ENCODE measurements at regions of chr7 and their contacts with region 1.

Region 1: GRCh38 chr7:156949541-156950380 is at the start of gene NOM1:
- DNase-seq: peak; percentile 85 to 91 (median 89)
- H3K4me3 ChIP-seq: peak within 1 kb of the TSS; percentile 85 to 94
- H3K4me3 Mint-ChIP-seq: peak within 1 kb of the TSS; percentile 94 to 97 (median 96)
- H3K27ac ChIP-seq: peak within 1 kb of the TSS; percentile 62
- H3K27ac Mint-ChIP-seq: peak within 1 kb of the TSS; percentile 82 to 97 (median 88)
- H3K4me1 ChIP-seq: peaks cover 32% of the 10 kb centered on the region
- H3K4me1 Mint-ChIP-seq: peaks cover 17 to 28% (median 25%) of the 10 kb centered on the region in 4 donors
- H3K27me3 ChIP-seq: no peaks in the 10 kb centered on the region
- H3K27me3 Mint-ChIP-seq: peaks cover 4 to 11% of the 10 kb centered on the region in 2 donors
- total RNA-seq, gene NOM1: 31.4 to 32.5 TPM

Region 2: DNA sequence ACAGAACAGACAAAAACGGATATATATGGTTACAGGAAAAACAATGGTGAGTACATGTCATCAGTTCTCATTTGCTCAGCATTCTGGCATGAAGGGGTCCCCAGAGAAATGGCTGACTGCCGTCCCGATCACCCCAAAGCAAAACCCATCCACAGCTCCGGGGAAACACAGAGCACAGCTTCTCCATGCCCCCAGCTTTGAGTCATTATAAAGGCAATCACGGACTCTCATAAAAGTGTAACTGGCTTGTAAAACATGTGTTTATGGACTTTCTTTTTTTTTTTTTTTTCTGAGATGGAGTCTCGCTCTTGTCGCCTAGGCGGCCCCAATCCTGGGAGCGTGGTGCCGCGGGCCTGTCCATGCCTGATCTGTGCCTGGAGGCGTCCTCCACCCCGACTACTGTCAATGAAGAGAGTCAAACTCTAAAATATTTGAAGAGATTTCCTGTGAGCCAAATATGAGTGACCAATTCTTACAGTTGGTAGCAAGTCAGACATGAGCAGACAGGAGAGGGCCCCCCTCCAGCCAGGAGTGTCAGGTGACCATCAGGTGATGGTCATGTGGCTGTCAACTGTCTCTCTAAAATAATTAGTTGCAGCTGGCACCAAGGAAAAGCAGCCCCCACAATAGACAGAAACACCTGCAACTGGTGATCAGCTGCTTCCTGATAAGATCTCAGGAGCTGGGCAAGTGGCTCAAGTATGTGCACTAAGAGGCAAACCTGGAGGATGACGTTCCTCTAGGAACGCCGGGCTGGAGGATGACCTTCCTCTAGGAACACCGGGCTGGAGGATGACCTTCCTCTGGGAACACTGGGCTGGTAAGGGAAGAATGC is 22.0 kb before region 1 on chr7:
- CTCF ChIA-PET with region 1: interaction called, 7 read pairs
- POLR2A ChIA-PET with region 1: interaction called, 10 read pairs
- intact Hi-C with region 1: loop called (anchors 2 kb)
- DNase-seq: no peak
- H3K4me3 ChIP-seq: no peak overlapping the region
- H3K4me3 Mint-ChIP-seq: no peak overlapping the region
- H3K27ac ChIP-seq: no peak overlapping the region
- H3K27ac Mint-ChIP-seq: peak overlapping the region in 5 of 7 donors; percentile 25 to 88 (median 36)
- H3K4me1 ChIP-seq: peaks cover 19% of the 10 kb centered on the region
- H3K4me1 Mint-ChIP-seq: peaks cover 14 to 43% (median 32%) of the 10 kb centered on the region in 4 donors
- H3K27me3 ChIP-seq: no peaks in the 10 kb centered on the region
- H3K27me3 Mint-ChIP-seq: peaks cover 0 to 4% of the 10 kb centered on the region in 2 donors

Region 3: DNA sequence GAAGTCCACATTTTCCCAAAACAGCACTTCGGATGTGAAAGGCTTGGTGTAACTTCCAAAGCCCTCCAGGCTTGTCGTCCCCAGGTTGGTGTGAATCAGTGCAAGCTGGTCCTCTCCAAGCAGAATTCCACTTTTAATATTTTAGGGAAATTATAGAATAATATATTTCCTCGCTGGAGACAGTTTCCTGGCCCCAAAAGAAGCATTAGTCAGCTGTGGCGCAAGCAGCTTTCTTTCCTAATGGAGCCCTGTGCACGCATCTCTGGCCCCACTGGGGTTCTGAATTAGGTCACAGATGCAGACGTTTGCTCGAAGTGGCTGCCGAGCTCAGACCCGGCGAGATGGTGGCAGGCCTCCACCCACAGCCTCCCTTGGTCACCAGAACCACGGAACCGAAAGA is 94.0 kb after region 1 on chr7:
- CTCF ChIA-PET with region 1: no interaction called
- POLR2A ChIA-PET with region 1: no interaction called
- intact Hi-C with region 1: no loop called
- DNase-seq: no peak
- H3K4me3 ChIP-seq: no peak overlapping the region
- H3K4me3 Mint-ChIP-seq: no peak overlapping the region
- H3K27ac ChIP-seq: no peak overlapping the region
- H3K27ac Mint-ChIP-seq: no peak overlapping the region
- H3K4me1 ChIP-seq: no peaks in the 10 kb centered on the region
- H3K4me1 Mint-ChIP-seq: peaks cover 0 to 3% (median 0%) of the 10 kb centered on the region in 4 donors
- H3K27me3 ChIP-seq: no peaks in the 10 kb centered on the region
- H3K27me3 Mint-ChIP-seq: peaks cover 3 to 9% of the 10 kb centered on the region in 2 donors

Measured in CD4-positive, alpha-beta memory T cell (primary cell).